ENCODE measurements at regions of chrX and their contacts with region 1.

Region 1: DNA sequence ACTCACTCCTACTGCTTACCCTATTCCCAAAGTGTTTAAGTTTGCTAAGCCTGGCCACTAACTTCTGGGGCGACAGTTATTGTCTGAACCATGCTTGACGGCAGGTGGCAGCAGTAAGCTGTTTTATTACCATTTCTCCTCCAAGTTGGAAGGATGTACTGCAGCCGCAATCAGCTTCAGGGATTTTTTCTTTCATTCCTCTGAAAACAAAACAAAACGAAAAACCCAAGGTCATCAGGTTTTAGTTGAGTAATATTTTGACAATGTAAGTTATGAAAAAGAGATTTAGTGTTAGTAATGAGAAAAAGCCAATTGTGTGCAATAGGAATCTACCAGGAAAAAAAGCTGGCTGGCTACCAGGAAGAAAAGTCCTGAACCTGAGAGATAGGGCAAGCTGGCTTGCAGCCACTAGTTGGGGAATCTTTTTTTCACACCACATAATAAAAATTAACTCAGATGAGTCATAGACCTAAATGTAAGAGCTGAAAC is 13.2 kb upstream of the RAB9B start:
- DNase-seq: peak; percentile 33
- ATAC-seq: peak; percentile 96
- H3K4me3 ChIP-seq: no peak overlapping the region
- H3K27ac ChIP-seq: no peak overlapping the region
- H3K4me1 ChIP-seq: no peaks in the 10 kb centered on the region
- H3K27me3 ChIP-seq: no peaks in the 10 kb centered on the region
- CTCF ChIP-seq: peak; percentile 64 to 81 (median 72)
- EP300 ChIP-seq: no peak
- POLR2A ChIP-seq: no peak
- RAD21 ChIP-seq: peak; percentile 72

Region 2: DNA sequence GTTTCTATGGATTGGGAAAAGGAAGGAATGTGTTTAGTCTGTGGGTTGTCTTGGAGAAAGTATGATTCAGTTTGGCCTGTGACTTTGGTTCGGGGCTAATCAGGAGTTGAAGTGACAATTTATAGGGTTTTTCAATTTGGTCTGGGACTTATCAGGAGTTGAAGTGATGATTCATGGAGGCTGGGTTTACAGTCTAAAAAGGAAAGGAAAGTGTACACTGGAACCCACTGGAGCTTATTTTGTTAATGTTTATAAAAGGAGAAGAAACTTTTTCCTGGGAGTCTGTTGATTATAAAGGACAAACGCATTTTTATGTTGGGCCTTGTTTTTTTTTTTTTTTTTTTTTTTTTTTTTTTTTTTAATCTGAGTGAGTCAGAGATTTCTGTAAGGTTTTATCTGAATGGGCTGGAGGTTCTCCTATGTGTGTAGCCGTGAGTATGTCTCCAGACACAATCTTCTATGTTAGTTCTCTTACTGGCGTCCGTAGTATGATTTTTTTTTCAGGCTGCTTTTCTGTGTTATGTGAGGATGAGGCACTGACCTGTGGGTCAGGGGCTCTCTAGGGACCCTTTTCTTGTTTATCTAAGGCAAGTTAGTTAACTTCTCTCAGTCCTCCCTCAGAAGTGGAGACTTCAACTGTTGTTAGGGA is 19.8 kb after region 1 on chrX:
- CTCF ChIA-PET with region 1: interaction called, 11 read pairs
- POLR2A ChIA-PET with region 1: no interaction called
- RAD21 ChIA-PET with region 1: no interaction called
- SMC1A ChIA-PET with region 1: no interaction called
- in situ Hi-C with region 1: no loop called
- intact Hi-C with region 1: no loop called
- DNase-seq: no peak
- ATAC-seq: no peak
- H3K4me3 ChIP-seq: no peak overlapping the region
- H3K27ac ChIP-seq: no peak overlapping the region
- H3K4me1 ChIP-seq: no peaks in the 10 kb centered on the region
- H3K27me3 ChIP-seq: no peaks in the 10 kb centered on the region
- CTCF ChIP-seq: no peak
- EP300 ChIP-seq: no peak
- POLR2A ChIP-seq: no peak
- RAD21 ChIP-seq: no peak

Region 3: DNA sequence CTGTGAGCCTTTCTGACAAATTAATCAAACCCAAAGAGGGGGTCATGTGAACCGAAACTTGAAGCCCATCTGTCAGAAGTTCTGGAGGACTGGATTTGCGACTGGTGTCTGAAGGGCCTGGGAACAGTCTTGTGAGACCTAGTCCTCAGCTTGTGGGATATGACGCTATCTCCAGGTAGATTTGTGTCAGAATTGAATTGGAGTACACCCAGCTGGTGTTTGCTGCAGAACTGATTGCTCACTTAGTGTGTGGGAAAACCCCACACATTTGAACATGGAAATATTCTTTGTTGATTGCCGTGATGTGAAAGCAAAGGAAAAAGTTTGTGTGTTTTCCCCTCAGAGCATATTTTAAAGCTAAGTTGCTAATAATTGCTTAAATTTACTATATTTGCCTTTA is 86.9 kb after region 1 on chrX:
- CTCF ChIA-PET with region 1: interaction called, 5 read pairs
- POLR2A ChIA-PET with region 1: no interaction called
- RAD21 ChIA-PET with region 1: interaction called, 5 read pairs
- SMC1A ChIA-PET with region 1: interaction called, 7 read pairs
- in situ Hi-C with region 1: loop called (anchors 5 kb)
- intact Hi-C with region 1: no loop called
- DNase-seq: no peak
- ATAC-seq: peak; percentile 94
- H3K4me3 ChIP-seq: no peak overlapping the region
- H3K27ac ChIP-seq: peak overlapping the region; percentile 48
- H3K4me1 ChIP-seq: no peaks in the 10 kb centered on the region
- H3K27me3 ChIP-seq: no peaks in the 10 kb centered on the region
- CTCF ChIP-seq: no peak
- EP300 ChIP-seq: no peak
- POLR2A ChIP-seq: no peak
- RAD21 ChIP-seq: no peak

Region 4: DNA sequence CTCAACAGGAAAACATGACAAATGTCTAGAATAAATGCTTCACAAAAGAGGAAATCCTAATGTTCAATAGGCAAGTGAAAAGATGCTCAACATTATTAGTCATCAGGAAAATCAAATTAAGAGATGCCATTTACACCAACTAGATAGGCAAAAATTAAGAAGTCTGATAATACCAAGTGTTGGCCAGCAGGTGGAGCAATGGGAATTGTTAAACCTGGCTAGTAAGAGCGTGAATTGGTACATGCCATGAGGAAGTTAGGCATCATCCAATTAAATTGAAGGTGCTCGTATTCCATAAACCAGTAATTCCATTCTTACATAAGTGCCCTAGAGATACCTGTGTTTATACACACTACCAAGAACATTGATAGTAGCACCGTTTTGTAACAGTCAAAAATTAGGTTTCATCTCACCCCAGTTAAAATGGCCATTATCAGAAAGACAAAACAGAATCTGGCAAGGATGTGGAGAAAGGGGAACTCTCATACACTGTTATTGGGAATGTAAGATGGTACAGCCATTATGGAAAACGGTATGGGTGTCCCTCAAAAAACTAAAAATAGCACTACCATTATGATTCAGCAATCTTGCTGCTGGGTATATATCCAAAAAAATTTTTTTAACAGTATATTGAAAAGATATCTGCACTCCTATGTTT is 253.1 kb after region 1 on chrX:
- CTCF ChIA-PET with region 1: interaction called, 18 read pairs
- POLR2A ChIA-PET with region 1: no interaction called
- RAD21 ChIA-PET with region 1: interaction called, 4 read pairs
- SMC1A ChIA-PET with region 1: interaction called, 7 read pairs
- in situ Hi-C with region 1: no loop called
- intact Hi-C with region 1: no loop called
- DNase-seq: no peak
- ATAC-seq: peak; percentile 92
- H3K4me3 ChIP-seq: no peak overlapping the region
- H3K27ac ChIP-seq: no peak overlapping the region
- H3K4me1 ChIP-seq: no peaks in the 10 kb centered on the region
- H3K27me3 ChIP-seq: no peaks in the 10 kb centered on the region
- CTCF ChIP-seq: peak; percentile 57 to 66 (median 64); a peak in 5 of 6 replicates
- EP300 ChIP-seq: no peak
- POLR2A ChIP-seq: no peak
- RAD21 ChIP-seq: peak; percentile 70

Region 5: GRCh38 chrX:104130808-104131207 is 285.6 kb after region 1 on chrX:
- CTCF ChIA-PET with region 1: interaction called, 32 read pairs
- POLR2A ChIA-PET with region 1: no interaction called
- RAD21 ChIA-PET with region 1: interaction called, 21 read pairs
- SMC1A ChIA-PET with region 1: interaction called, 16 read pairs
- in situ Hi-C with region 1: loop called (anchors 5 kb)
- intact Hi-C with region 1: loop called (anchors 1 kb)
- DNase-seq: no peak
- ATAC-seq: no peak
- H3K4me3 ChIP-seq: no peak overlapping the region
- H3K27ac ChIP-seq: no peak overlapping the region
- H3K4me1 ChIP-seq: no peaks in the 10 kb centered on the region
- H3K27me3 ChIP-seq: no peaks in the 10 kb centered on the region
- CTCF ChIP-seq: no peak
- EP300 ChIP-seq: no peak
- POLR2A ChIP-seq: no peak
- RAD21 ChIP-seq: no peak